ENCODE measurements at regions of chr6 and their contacts with region 1.

Region 1: DNA sequence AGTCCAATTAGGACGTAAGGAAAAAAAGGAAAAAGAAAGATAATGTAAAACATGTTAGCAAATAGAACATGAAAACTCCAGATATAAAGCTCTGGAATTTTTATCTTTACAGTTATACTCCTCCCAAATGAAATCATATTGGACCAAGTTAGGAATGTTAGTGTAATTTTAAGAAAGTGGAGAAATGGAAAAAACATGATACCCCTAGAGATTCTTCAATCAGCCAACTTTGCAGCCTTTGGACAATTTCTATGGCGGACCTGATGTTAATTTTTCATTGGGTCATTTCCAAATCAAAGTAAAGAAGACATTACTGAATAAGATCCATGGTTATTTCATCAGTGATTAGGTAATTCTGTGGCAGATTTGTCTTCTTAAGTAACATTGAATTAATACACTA is 748.7 kb downstream of the RFPL4B start:
- DNase-seq: no peak
- H3K4me3 ChIP-seq: no peak overlapping the region
- H3K27ac ChIP-seq: no peak overlapping the region
- H3K4me1 ChIP-seq: no peaks in the 10 kb centered on the region
- H3K27me3 ChIP-seq: no peaks in the 10 kb centered on the region
- CTCF ChIP-seq: no peak

Region 2: DNA sequence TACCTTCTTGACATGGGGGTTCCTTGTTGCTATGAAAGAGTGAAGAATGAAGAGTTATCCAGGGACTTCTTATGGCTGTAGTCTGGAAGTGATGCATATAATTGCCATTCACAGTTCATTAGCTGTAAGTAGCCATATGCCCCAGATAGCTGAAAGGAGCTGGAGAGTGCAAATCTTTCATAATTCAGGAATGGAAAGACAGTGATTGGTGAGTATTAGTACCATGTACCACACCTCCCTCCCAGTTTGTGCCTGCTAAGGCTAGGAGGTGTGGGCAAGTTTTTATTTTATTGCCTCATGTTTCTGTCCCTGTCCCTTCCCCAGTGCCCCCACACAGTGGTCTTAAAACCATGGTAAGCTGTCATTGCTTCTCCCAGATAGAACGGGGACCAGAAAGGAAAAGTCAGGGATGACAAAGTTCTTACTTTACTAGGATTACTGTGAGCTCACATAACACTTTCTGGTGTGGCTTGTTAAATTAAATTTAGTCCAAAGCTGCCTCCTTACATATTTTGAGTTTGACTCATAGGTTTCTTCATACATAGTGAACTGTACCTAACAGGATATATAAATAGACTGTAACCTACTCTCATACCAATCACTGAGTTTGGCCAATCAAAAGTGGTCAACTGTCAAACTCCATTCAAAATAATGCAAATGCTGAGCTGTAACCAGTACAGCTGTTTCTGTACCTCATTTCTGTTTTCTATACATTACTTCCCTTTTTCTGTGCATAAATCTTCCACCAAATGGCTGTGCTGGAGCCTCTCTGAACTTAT is 629.3 kb before region 1 on chr6:
- CTCF ChIA-PET with region 1: no interaction called
- POLR2A ChIA-PET with region 1: no interaction called
- intact Hi-C with region 1: no loop called
- DNase-seq: peak; percentile 7 to 83
- H3K4me3 ChIP-seq: peak overlapping the region; percentile 2; the same call in 1 of the 2 replicates
- H3K27ac ChIP-seq: peak overlapping the region; percentile 44
- H3K4me1 ChIP-seq: peaks cover 21% of the 10 kb centered on the region
- H3K27me3 ChIP-seq: no peaks in the 10 kb centered on the region
- CTCF ChIP-seq: no peak

Region 3: GRCh38 chr6:113050979-113051378 is 44.9 kb before region 1 on chr6:
- CTCF ChIA-PET with region 1: no interaction called
- POLR2A ChIA-PET with region 1: interaction called, 16 read pairs
- intact Hi-C with region 1: no loop called
- DNase-seq: no peak
- H3K4me3 ChIP-seq: no peak overlapping the region
- H3K27ac ChIP-seq: no peak overlapping the region
- H3K4me1 ChIP-seq: peaks cover 6% of the 10 kb centered on the region; the same call in 1 of the 2 replicates
- H3K27me3 ChIP-seq: no peaks in the 10 kb centered on the region
- CTCF ChIP-seq: no peak

Measured in PC-9 (cell line).